ENCODE measurements at regions of chr11 and their contacts with region 1.

Region 1: GRCh38 chr11:60615497-60615896 is 83.9 kb upstream of the MS4A8 start:
- DNase-seq: no peak
- ATAC-seq: no peak
- H3K4me3 ChIP-seq: no peak overlapping the region
- H3K27ac ChIP-seq: no peak overlapping the region
- H3K4me1 ChIP-seq: no peaks in the 10 kb centered on the region
- H3K27me3 ChIP-seq: peaks cover 3% of the 10 kb centered on the region; the same call in 1 of the 2 replicates
- CTCF ChIP-seq: no peak

Region 2: DNA sequence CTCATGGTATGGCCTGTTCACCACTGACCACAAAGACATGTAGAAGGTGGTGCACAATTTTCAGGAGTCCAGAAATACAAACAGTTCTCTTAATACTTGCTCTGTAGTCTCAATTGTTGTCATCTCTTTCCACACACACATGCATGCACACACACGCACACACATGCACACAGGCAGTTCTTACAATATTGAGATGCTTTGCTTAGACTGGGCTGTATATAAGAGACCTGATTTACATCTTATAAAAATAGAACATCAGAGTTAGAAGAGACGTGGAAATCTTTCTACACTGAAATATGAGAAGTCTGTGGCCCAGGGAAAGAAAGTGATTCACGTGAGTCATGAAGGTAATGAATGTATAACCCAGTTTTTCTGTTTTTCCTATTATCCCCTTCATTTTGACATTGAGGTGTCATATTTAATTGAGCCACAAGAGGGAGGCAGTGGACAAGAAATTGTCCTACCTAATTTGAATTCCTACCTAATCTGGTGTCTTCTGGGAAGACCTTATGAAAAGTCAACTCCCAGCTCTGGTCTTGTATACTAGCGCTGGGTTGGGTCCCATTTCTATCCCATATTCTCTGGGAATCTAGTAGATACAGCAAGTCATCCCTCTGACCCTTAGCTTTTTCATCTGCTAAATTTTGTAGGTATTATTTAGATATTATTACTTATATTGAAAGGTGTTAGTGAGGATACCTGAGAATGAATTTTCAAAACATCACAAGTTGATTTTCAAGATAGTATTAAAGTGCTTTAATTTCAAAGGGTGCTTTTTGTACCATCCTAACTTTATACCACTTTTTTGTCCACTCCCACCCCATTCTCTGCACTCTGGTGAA is 349.9 kb before region 1 on chr11:
- CTCF ChIA-PET with region 1: no interaction called
- POLR2A ChIA-PET with region 1: no interaction called
- in situ Hi-C with region 1: no loop called
- intact Hi-C with region 1: loop called (anchors 2 kb)
- DNase-seq: peak; percentile 10
- ATAC-seq: 0 out of 2 replicates have a peak, but pooled peaks have one; percentile 60
- H3K4me3 ChIP-seq: no peak overlapping the region
- H3K27ac ChIP-seq: no peak overlapping the region
- H3K4me1 ChIP-seq: no peaks in the 10 kb centered on the region
- H3K27me3 ChIP-seq: no peaks in the 10 kb centered on the region; the same call in 1 of the 2 replicates
- CTCF ChIP-seq: peak; percentile 71

Region 3: DNA sequence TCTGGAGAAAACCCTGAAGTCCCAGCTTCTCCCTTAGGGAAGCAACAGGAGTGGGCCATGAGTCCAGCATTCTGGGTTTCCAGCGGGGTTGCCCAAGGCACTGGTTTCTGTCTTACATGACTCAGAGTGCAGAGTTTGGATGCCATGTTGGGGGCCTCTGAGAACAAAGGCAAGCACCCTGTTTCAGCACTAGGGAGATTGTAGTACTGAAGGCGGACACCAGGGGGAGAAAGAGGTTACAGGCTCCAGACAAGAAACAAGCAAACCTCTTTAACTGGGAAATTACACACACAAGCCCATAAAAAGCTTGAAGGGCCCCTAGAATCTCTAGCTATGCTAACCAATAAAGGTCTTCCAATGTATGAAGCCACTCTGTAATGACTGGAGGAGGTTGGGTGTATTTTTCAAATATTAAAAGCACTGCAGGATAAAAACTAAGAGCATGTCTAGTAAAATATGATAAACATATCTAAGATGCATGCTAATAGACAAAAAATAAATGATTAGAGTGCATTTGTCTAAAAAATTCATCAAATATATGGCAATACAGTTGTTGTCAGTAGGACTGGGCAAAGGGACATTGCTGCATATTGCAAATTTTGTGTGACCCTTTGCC is 281.4 kb before region 1 on chr11:
- CTCF ChIA-PET with region 1: no interaction called
- POLR2A ChIA-PET with region 1: no interaction called
- in situ Hi-C with region 1: no loop called
- intact Hi-C with region 1: loop called (anchors 1 kb)
- DNase-seq: peak; percentile 46
- ATAC-seq: peak; percentile 81
- H3K4me3 ChIP-seq: peak overlapping the region in 1 of 2 experiments; percentile 7; a peak in 1 of 4 replicates
- H3K27ac ChIP-seq: no peak overlapping the region
- H3K4me1 ChIP-seq: no peaks in the 10 kb centered on the region
- H3K27me3 ChIP-seq: no peaks in the 10 kb centered on the region
- CTCF ChIP-seq: peak; percentile 84

Region 4: GRCh38 chr11:60345489-60345888 is 270.0 kb before region 1 on chr11:
- CTCF ChIA-PET with region 1: no interaction called
- POLR2A ChIA-PET with region 1: no interaction called
- in situ Hi-C with region 1: no loop called
- intact Hi-C with region 1: loop called (anchors 5 kb)
- DNase-seq: no peak
- ATAC-seq: no peak
- H3K4me3 ChIP-seq: no peak overlapping the region
- H3K27ac ChIP-seq: no peak overlapping the region
- H3K4me1 ChIP-seq: no peaks in the 10 kb centered on the region
- H3K27me3 ChIP-seq: peaks cover 2% of the 10 kb centered on the region; the same call in 1 of the 2 replicates
- CTCF ChIP-seq: peak; percentile 71

Region 5: GRCh38 chr11:60363542-60364510 is 251.7 kb before region 1 on chr11:
- CTCF ChIA-PET with region 1: interaction called, 10 read pairs
- POLR2A ChIA-PET with region 1: no interaction called
- in situ Hi-C with region 1: no loop called
- intact Hi-C with region 1: loop called (anchors 1 kb)
- DNase-seq: peak; percentile 43
- ATAC-seq: peak; percentile 91
- H3K4me3 ChIP-seq: no peak overlapping the region
- H3K27ac ChIP-seq: peak overlapping the region; percentile 32; the same call in 1 of the 2 replicates
- H3K4me1 ChIP-seq: peaks cover 5% of the 10 kb centered on the region; the same call in 1 of the 2 replicates
- H3K27me3 ChIP-seq: no peaks in the 10 kb centered on the region
- CTCF ChIP-seq: peak; percentile 84

Region 6: GRCh38 chr11:60485986-60486385 is 129.5 kb before region 1 on chr11:
- CTCF ChIA-PET with region 1: no interaction called
- POLR2A ChIA-PET with region 1: no interaction called
- in situ Hi-C with region 1: no loop called
- intact Hi-C with region 1: loop called (anchors 10 kb)
- DNase-seq: peak; percentile 54
- ATAC-seq: peak; percentile 91
- H3K4me3 ChIP-seq: no peak overlapping the region
- H3K27ac ChIP-seq: no peak overlapping the region
- H3K4me1 ChIP-seq: no peaks in the 10 kb centered on the region
- H3K27me3 ChIP-seq: no peaks in the 10 kb centered on the region
- CTCF ChIP-seq: peak; percentile 83

Measured in Panc1 (cell line).